Activated CD4-positive, alpha-beta T cell treated with anti-CD3 and anti-CD28 coated beads for 36 hours (primary cell): ENCODE measurements at regions of chr19 and their contacts with region 1.

Region 1: GRCh38 chr19:40750059-40750873 is at the start of gene ACTMAP:
- DNase-seq: peak; percentile 100
- ATAC-seq: peak; percentile 90
- H3K4me3 Mint-ChIP-seq: peak within 1 kb of the TSS; percentile 81
- H3K27ac Mint-ChIP-seq: peak within 1 kb of the TSS; percentile 99
- H3K4me1 Mint-ChIP-seq: peaks cover 34% of the 10 kb centered on the region
- H3K27me3 Mint-ChIP-seq: no peaks in the 10 kb centered on the region
- total RNA-seq, gene ACTMAP: 15.0 to 18.0 TPM

Region 2: DNA sequence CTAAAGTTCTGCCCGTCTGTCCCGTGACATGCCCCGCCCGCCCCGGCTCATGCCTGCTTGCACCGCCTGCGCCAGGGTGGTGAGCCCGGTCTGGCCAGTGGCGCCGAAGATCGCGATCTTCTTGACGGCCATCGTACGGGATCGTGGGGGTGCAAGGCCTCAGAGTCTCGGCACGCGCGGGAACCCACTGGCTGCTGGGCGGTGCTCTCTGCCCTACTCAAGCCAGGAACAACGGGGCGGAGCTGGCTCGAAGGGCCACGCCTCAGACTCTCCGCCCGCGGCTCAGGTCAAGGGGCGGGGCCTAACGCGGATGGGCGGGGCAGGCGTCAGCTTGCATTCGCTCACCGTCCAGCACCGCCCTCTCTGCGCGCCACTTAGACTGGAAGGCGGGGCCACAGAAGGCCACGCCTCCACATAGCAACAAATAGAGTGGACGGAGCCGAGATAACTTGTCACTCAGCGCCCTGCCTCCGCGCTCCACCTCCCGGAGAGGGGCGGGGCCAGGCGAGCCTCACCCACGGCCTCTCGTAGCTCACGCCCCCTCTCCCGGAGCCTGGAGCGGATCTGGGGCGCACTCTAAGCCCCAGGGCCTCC is 284.6 kb before region 1 on chr19 and contains the start of gene BLVRB:
- CTCF ChIA-PET with region 1: no interaction called
- POLR2A ChIA-PET with region 1: no interaction called
- intact Hi-C with region 1: loop called in 1 of 2 experiments (anchors 1 kb)
- DNase-seq: peak; percentile 100
- ATAC-seq: peak; percentile 84
- H3K4me3 Mint-ChIP-seq: peak within 1 kb of the TSS; percentile 77
- H3K27ac Mint-ChIP-seq: peak within 1 kb of the TSS; percentile 87
- H3K4me1 Mint-ChIP-seq: peaks cover 30% of the 10 kb centered on the region
- H3K27me3 Mint-ChIP-seq: peaks cover 11% of the 10 kb centered on the region
- total RNA-seq, gene BLVRB: 34.1 to 35.6 TPM

Region 3: GRCh38 chr19:40690693-40691420 is 59.4 kb before region 1 on chr19:
- CTCF ChIA-PET with region 1: no interaction called
- POLR2A ChIA-PET with region 1: no interaction called
- intact Hi-C with region 1: loop called (anchors 1 to 2 kb)
- DNase-seq: peak; percentile 97
- ATAC-seq: peak; percentile 85
- H3K4me3 Mint-ChIP-seq: peak overlapping the region; percentile 80
- H3K27ac Mint-ChIP-seq: peak overlapping the region; percentile 87
- H3K4me1 Mint-ChIP-seq: peaks cover 5% of the 10 kb centered on the region
- H3K27me3 Mint-ChIP-seq: no peaks in the 10 kb centered on the region

Region 4: GRCh38 chr19:40791996-40792391 is 41.7 kb after region 1 on chr19:
- CTCF ChIA-PET with region 1: interaction called, 3 read pairs
- POLR2A ChIA-PET with region 1: interaction called, 5 read pairs
- intact Hi-C with region 1: loop called in 1 of 2 experiments (anchors 1 kb)
- DNase-seq: no peak
- ATAC-seq: no peak
- H3K4me3 Mint-ChIP-seq: no peak overlapping the region
- H3K27ac Mint-ChIP-seq: peak overlapping the region; percentile 68
- H3K4me1 Mint-ChIP-seq: peaks cover 23% of the 10 kb centered on the region
- H3K27me3 Mint-ChIP-seq: no peaks in the 10 kb centered on the region

Region 5: GRCh38 chr19:40908976-40909375 is 158.7 kb after region 1 on chr19:
- CTCF ChIA-PET with region 1: interaction called, 6 read pairs
- POLR2A ChIA-PET with region 1: no interaction called
- intact Hi-C with region 1: loop called in 1 of 2 experiments (anchors 2 kb)
- DNase-seq: peak; percentile 69
- ATAC-seq: peak; percentile 72
- H3K4me3 Mint-ChIP-seq: peak overlapping the region; percentile 62
- H3K27ac Mint-ChIP-seq: no peak overlapping the region
- H3K4me1 Mint-ChIP-seq: peaks cover 13% of the 10 kb centered on the region
- H3K27me3 Mint-ChIP-seq: peaks cover 19% of the 10 kb centered on the region

Region 6: DNA sequence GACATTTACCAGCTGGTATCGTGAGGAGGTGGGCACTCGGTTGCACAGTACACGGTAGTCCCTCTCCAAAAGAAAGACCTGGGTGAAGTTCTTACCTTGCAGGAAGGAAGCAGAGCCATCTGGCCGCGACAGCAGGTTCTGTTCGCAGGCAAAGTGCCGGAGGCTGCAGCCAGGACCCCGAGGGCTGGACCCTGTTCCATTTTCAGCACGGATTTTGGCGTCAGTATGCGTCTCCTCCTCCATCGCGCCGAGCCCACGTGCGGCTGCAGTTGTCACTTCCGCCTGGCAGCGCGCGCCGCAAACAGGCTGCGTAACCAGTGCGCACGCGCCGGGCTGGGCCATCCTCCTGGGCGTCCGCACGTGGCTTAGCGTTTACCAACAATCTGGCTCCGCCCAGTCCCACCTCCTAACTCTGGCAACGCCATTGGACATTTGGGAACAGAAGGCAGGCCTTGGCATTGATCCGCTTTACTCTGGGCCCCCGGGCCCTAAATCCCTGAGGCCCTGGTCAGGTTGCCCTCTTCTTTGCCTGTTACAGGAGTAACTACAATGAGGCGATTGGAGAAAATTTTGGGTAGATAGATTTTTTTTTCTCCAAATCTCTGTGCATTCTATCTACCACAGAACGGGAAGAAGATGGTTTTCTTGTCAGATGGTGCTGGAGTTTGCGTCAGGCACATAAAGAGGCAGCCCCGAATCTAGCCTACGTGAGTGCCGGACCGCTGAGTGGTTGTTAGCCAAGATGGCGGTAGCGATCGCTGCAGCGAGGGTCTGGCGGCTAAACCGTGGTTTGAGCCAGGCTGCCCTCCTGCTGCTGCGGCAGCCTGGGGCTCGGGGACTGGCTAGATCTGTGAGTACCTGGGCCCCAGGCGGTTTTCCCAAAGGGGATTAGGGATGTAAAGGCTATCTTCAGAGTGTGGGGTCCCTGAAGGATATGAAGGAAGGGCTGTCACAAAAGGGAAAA is 647.1 kb after region 1 on chr19 and contains the starts of genes BCKDHA and EXOSC5:
- CTCF ChIA-PET with region 1: no interaction called
- POLR2A ChIA-PET with region 1: no interaction called
- intact Hi-C with region 1: loop called in 1 of 2 experiments (anchors 2 kb)
- DNase-seq: peak; percentile 99
- ATAC-seq: peak; percentile 100
- H3K4me3 Mint-ChIP-seq: peak within 1 kb of the TSS; percentile 97
- H3K27ac Mint-ChIP-seq: peak within 1 kb of the TSS; percentile 97
- H3K4me1 Mint-ChIP-seq: peaks cover 31% of the 10 kb centered on the region
- H3K27me3 Mint-ChIP-seq: no peaks in the 10 kb centered on the region
- total RNA-seq, gene BCKDHA: 14.5 to 25.4 TPM
- total RNA-seq, gene EXOSC5: 32.7 to 47.8 TPM

Region 7: DNA sequence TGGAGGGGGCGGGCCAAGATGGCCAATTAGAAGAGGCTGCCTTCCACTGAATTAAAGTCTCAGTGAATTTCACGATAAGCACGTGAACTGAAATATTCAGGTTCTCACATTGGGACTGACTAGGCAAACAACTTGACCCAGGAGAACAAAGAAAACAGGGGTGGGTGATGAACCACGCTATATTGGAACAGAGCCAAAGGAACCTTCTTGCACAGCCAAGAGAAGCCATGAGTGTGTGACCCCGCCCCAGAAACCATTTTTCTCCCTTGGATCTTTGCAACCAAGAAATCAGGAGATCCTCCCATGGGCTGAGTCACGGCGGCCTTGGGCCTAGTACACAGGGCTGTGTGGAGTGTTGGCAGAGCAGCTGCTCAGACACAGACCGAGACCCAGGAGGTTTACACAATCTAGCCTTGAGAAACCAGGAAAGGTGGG is 729.5 kb after region 1 on chr19:
- CTCF ChIA-PET with region 1: no interaction called
- POLR2A ChIA-PET with region 1: no interaction called
- intact Hi-C with region 1: no loop called
- DNase-seq: peak; percentile 37
- ATAC-seq: peak; percentile 42
- H3K4me3 Mint-ChIP-seq: no peak overlapping the region
- H3K27ac Mint-ChIP-seq: no peak overlapping the region
- H3K4me1 Mint-ChIP-seq: no peaks in the 10 kb centered on the region
- H3K27me3 Mint-ChIP-seq: peaks cover 17% of the 10 kb centered on the region